Heart left ventricle (tissue), 16 donors: ENCODE measurements at regions of chr7 and their contacts with region 1.

Region 1: DNA sequence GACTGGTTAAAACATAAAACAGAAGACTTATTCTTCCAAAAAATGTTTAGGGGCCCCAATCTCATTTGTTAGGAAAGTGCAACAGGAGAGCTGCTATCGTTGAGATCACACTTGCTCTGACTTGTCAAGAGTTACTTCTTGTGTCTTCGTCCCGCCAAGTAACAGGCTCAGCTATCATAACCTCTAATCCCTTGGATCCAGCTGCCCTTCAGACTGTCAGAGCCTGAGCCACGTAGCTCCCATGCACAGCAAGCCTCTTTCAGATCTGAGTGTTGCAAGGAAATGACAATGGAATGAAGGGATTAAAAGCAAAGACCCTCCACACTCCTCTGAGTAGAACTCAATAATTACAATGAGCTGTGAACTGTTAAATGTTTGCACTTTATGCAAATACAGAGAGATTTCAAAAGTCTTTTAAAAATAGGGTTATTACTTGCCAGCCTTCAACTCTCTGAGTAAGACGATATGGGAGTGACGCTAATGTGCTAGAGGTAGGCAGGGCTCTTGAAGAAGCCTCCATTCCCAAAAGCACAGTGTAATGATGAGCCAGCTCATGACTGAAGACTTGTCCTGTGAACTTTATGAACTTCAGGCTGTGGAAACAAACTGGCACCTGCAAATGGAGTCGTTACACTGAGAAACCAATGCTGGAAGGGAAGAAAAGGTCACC is 28.4 kb upstream of the CDK13 start:
- DNase-seq: no peak
- ATAC-seq: no peak
- H3K4me3 ChIP-seq: no peak overlapping the region
- H3K27ac ChIP-seq: no peak overlapping the region
- H3K4me1 ChIP-seq: no peaks in the 10 kb centered on the region
- H3K27me3 ChIP-seq: no peaks in the 10 kb centered on the region
- CTCF ChIP-seq: no peak
- POLR2A ChIP-seq: no peak

Region 2: GRCh38 chr7:39623018-39623731 is 298.5 kb before region 1 on chr7 and contains the start of gene RALA:
- intact Hi-C with region 1: no loop called
- DNase-seq: peak; percentile 93 to 96 (median 95)
- ATAC-seq: peak; percentile 98 to 100 (median 99)
- H3K4me3 ChIP-seq: peak within 1 kb of the TSS; percentile 67 to 94 (median 89)
- H3K27ac ChIP-seq: peak within 1 kb of the TSS; percentile 80 to 96 (median 92)
- H3K4me1 ChIP-seq: peaks cover 6 to 56% (median 38%) of the 10 kb centered on the region in 12 donors
- H3K27me3 ChIP-seq: no peaks in the 10 kb centered on the region
- CTCF ChIP-seq: peak in 3 of 12 donors; percentile 4 to 21 (median 6)
- POLR2A ChIP-seq: peak in 1 of 2 donors; percentile 82
- total RNA-seq, gene RALA: 13.5 to 37.1 (median 23.4) TPM

Region 3: GRCh38 chr7:39855325-39855674 is 66.3 kb before region 1 on chr7:
- intact Hi-C with region 1: loop called in 1 of 10 experiments (anchors 10 kb)
- DNase-seq: no peak
- ATAC-seq: no peak
- H3K4me3 ChIP-seq: peak overlapping the region in 11 of 12 donors; percentile 24 to 55 (median 44)
- H3K27ac ChIP-seq: no peak overlapping the region
- H3K4me1 ChIP-seq: peaks cover 0 to 8% (median 0%) of the 10 kb centered on the region in 12 donors
- H3K27me3 ChIP-seq: peaks cover 0 to 7% (median 0%) of the 10 kb centered on the region in 9 donors
- CTCF ChIP-seq: no peak
- POLR2A ChIP-seq: no peak